Motor neuron (in vitro differentiated cells): ENCODE measurements at regions of chr18 and their contacts with region 1.

Region 1: DNA sequence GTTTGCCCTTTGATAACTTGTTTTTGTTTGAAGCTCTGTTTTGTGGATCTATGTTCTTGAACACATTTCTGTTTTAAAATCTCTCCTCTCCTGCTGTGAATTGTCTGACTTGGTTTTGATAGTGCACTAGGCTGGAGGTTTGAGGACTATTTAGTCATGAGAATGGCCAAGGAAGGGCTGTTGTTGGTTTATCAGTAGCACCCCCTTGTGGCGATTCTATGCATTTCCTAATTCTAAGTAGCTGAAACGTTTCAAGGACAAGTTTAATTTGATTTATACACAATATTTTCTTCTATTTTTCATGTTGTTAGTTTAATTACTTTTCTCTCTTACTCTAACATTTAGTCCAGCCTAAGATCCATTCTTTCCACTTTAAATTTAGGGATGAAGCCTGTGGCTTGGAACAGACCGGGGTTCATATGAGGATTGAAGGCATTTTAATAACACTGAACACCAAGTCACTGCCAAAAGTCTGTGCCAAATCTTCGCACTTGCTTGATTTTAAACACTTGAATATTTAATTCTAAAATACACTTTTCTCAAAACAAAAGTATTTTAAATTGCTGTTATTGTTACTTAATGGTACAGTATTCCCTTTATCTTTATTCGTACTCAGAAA is 166.0 kb downstream of the SOCS6 start:
- ATAC-seq: peak; percentile 47 to 81 (median 66)
- H3K4me3 ChIP-seq: no peak overlapping the region
- H3K27ac ChIP-seq: no peak overlapping the region
- H3K4me1 ChIP-seq: no peaks in the 10 kb centered on the region

Region 2: DNA sequence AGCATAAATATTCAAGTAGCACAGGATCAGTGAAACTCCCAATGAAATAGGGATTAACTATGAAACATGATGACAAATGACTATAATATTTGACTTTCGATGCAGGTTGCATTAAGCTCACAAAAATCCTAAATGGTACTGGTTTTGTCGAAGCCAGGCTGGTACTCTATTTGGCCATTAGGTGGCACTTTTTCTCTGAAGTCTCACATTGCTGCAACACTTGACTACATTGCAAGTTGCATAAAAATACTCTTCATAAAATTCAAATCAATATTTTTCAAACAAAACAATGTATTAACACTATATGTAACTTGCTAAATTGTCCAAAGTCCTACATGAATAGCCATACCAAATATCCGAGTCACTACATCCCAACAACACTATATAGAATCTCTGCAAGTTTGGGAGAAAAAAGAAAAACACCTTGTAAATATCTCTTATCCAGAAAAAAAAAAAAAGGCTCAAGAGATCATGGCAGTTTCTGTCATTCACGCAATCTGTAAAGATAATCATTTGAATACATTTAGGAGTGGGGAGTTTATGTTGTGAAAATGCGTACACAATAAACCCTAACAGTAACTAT is 258.9 kb before region 1 on chr18:
- in situ Hi-C with region 1: loop called in 1 of 9 experiments (anchors 10 kb)
- ATAC-seq: peak in 4 of 8 experiments; percentile 26 to 67 (median 55)
- H3K4me3 ChIP-seq: no peak overlapping the region
- H3K27ac ChIP-seq: no peak overlapping the region
- H3K4me1 ChIP-seq: no peaks in the 10 kb centered on the region

Region 3: GRCh38 chr18:70720607-70721006 is 265.8 kb after region 1 on chr18:
- in situ Hi-C with region 1: no loop called
- ATAC-seq: no peak
- H3K4me3 ChIP-seq: no peak overlapping the region
- H3K27ac ChIP-seq: no peak overlapping the region
- H3K4me1 ChIP-seq: no peaks in the 10 kb centered on the region